ENCODE measurements at regions of chr12 and their contacts with region 1.

Region 1: GRCh38 chr12:49322708-49323523 is at the start of gene TROAP:
- DNase-seq: peak; percentile 98
- ATAC-seq: peak; percentile 99
- H3K4me3 ChIP-seq: peak within 1 kb of the TSS; percentile 66 to 85 (median 70)
- H3K4me3 Mint-ChIP-seq: peak within 1 kb of the TSS; percentile 99
- H3K27ac ChIP-seq: peak within 1 kb of the TSS; percentile 40 to 74
- H3K27ac Mint-ChIP-seq: peak within 1 kb of the TSS; percentile 85
- H3K4me1 ChIP-seq: peaks cover 12 to 18% of the 10 kb centered on the region in 2 donors
- H3K4me1 Mint-ChIP-seq: peaks cover 23% of the 10 kb centered on the region
- H3K27me3 ChIP-seq: no peaks in the 10 kb centered on the region
- H3K27me3 Mint-ChIP-seq: no peaks in the 10 kb centered on the region
- CTCF ChIP-seq: no peak
- total RNA-seq, gene TROAP: 1.0 and 1.7 TPM in 2 replicates

Region 2: DNA sequence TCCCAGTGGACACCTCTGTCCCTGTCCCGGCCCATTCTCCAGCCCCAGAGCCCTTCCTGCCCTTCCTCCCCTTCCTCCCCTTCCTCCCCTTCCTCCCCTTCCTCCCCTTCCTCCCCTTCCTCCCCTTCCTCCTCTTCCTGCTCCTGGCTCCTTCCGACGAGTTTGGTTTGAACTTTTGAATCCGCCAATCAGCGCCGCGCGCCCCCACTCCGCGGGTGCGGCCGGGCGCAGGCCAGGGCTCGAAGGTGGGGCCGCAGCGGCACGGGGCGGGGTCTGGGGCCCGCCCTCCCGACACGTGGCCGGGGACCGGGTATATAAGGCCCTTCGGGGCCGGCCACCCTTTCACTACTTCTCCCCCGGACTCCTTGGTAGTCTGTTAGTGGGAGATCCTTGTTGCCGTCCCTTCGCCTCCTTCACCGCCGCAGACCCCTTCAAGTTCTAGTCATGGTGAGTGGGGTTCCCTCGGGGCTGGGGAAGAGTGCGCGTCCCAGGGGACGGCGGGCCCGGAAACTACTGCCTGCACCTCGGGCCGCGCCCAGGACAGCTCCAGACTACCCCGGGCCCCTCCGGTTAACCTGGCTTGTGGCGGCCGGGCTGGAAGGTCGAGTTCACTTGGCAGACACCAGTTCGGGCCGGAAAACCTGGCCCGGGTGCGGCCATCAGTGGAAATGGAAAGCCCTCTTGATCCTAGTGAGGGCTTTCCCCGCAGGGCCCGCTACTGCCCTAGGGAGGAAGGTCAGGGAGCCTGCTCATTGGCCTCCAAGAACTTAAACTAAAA is 58.0 kb before region 1 on chr12 and contains the start of gene TUBA1C:
- CTCF ChIA-PET with region 1: no interaction called
- POLR2A ChIA-PET with region 1: interaction called, 8 read pairs
- intact Hi-C with region 1: loop called (anchors 1 kb)
- DNase-seq: peak; percentile 92
- ATAC-seq: peak; percentile 93
- H3K4me3 ChIP-seq: peak within 1 kb of the TSS; percentile 42 to 98 (median 83)
- H3K4me3 Mint-ChIP-seq: peak within 1 kb of the TSS; percentile 97
- H3K27ac ChIP-seq: peak within 1 kb of the TSS; percentile 80 to 82
- H3K27ac Mint-ChIP-seq: peak within 1 kb of the TSS; percentile 94
- H3K4me1 ChIP-seq: peaks cover 4 to 12% of the 10 kb centered on the region in 2 donors
- H3K4me1 Mint-ChIP-seq: peaks cover 20% of the 10 kb centered on the region
- H3K27me3 ChIP-seq: no peaks in the 10 kb centered on the region
- H3K27me3 Mint-ChIP-seq: no peaks in the 10 kb centered on the region
- CTCF ChIP-seq: no peak
- total RNA-seq, gene TUBA1C: 34.9 and 35.2 TPM in 2 replicates

Region 3: GRCh38 chr12:49336645-49337584 is 14.0 kb after region 1 on chr12 and contains the start of gene C1QL4:
- CTCF ChIA-PET with region 1: interaction called, 20 read pairs
- POLR2A ChIA-PET with region 1: no interaction called
- intact Hi-C with region 1: loop called (anchors 1 kb)
- DNase-seq: peak; percentile 91
- ATAC-seq: peak; percentile 98
- H3K4me3 ChIP-seq: peak within 1 kb of the TSS in 4 of 5 experiments; percentile 21 to 50 (median 46)
- H3K4me3 Mint-ChIP-seq: peak within 1 kb of the TSS; percentile 80
- H3K27ac ChIP-seq: no peak within 1 kb of the TSS
- H3K27ac Mint-ChIP-seq: peak within 1 kb of the TSS; percentile 61
- H3K4me1 ChIP-seq: peaks cover 38 to 39% of the 10 kb centered on the region in 2 donors
- H3K4me1 Mint-ChIP-seq: peaks cover 38% of the 10 kb centered on the region
- H3K27me3 ChIP-seq: peaks cover 0 to 86% (median 49%) of the 10 kb centered on the region in 4 experiments
- H3K27me3 Mint-ChIP-seq: peaks cover 66% of the 10 kb centered on the region
- CTCF ChIP-seq: peak; percentile 99
- total RNA-seq, gene C1QL4: not detected in 2 replicates

Region 4: DNA sequence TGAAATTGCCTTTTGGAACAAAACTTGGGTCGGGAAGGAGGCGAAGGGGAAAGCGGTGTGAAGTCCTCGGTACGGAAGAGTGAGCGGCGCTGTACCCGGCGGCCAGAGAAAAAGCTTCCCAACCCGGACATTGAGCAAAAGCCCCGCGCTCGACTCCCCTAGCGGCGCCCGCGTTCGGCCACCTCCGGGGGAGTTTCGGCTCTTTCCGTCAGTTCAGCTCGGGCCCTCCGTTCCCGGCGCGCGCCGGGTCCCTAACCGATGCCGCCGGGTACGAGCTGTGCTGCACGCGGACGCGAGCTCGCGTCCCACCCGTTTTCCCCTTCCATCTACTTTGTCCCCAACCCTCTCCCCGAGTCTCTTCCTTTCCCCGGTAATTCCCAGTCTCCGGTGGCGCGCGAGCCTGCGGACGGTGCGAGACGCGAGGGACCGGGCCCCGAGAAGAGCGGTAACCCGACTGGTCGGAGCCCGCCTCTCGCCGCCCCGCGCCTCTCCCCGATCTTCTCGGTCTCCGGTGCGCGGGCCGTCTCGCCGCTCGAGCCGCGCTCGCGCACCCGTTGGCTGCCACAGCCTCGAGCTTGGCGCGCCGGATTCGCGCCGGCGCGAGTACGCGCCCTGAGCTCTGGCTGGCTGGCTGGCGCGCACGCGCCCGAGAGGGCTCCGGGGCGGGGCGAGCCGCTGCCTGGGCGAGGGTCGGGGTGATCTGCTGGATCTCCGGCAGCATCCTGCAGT is 43.9 kb after region 1 on chr12:
- CTCF ChIA-PET with region 1: interaction called, 4 read pairs
- POLR2A ChIA-PET with region 1: interaction called, 4 read pairs
- intact Hi-C with region 1: loop called (anchors 1 kb)
- DNase-seq: peak; percentile 90
- ATAC-seq: peak; percentile 78
- H3K4me3 ChIP-seq: peak overlapping the region; percentile 61 to 96 (median 80)
- H3K4me3 Mint-ChIP-seq: peak overlapping the region; percentile 87
- H3K27ac ChIP-seq: peak overlapping the region; percentile 90 to 91
- H3K27ac Mint-ChIP-seq: peak overlapping the region; percentile 98
- H3K4me1 ChIP-seq: peaks cover 33 to 39% of the 10 kb centered on the region in 2 donors
- H3K4me1 Mint-ChIP-seq: peaks cover 46% of the 10 kb centered on the region
- H3K27me3 ChIP-seq: no peaks in the 10 kb centered on the region
- H3K27me3 Mint-ChIP-seq: no peaks in the 10 kb centered on the region
- CTCF ChIP-seq: peak; percentile 44

Measured in B cell (primary cell).